Calu3 (cell line): ENCODE measurements at regions of chr10 and their contacts with region 1.

Region 1: DNA sequence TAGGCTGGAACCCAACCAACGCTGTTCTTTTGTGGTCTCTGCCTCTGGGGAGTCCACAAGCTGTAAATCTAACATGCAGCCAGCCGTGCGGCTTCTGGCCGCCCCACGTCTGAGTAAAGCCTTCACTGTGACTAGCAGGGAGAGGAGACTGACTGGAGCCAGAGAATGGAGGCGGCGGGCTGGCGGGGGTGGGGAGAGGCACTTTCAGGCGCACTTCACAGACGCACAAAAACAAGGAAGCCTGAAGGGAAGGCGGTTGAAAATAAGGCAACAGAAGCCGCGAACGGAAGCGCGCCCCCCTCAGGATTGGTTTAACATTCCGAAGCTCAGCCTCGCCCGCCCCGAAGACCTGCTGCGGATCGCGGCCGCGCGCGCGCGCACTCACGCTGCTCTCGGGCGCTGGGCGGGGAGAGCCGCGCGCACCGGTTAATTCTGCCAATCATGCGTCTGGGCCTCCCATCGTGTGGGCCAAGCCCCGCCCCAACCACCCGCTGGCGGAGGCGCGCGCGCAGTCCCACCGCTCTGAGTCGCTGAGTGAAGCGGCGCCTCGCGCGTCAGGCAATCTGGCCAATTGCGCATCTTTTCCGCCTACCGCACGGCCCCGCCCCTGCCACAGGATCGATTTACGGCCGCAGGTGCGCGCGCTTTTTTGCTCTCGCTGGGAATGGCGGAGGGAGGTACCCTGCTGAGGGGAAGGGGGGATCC is at the start of gene SFR1:
- DNase-seq: peak; percentile 96
- H3K4me3 Mint-ChIP-seq: peak within 1 kb of the TSS; percentile 70
- H3K27ac Mint-ChIP-seq: peak within 1 kb of the TSS; percentile 94
- H3K4me1 Mint-ChIP-seq: peaks cover 26% of the 10 kb centered on the region
- H3K27me3 Mint-ChIP-seq: no peaks in the 10 kb centered on the region
- CTCF ChIP-seq: peak; percentile 38
- total RNA-seq, gene SFR1: 10.2 and 11.6 TPM in 2 replicates

Region 2: GRCh38 chr10:103933557-103934121 is 188.0 kb before region 1 on chr10:
- CTCF ChIA-PET with region 1: no interaction called
- intact Hi-C with region 1: no loop called
- DNase-seq: no peak
- H3K4me3 Mint-ChIP-seq: no peak overlapping the region
- H3K27ac Mint-ChIP-seq: no peak overlapping the region
- H3K4me1 Mint-ChIP-seq: no peaks in the 10 kb centered on the region
- H3K27me3 Mint-ChIP-seq: no peaks in the 10 kb centered on the region
- CTCF ChIP-seq: no peak

Region 3: DNA sequence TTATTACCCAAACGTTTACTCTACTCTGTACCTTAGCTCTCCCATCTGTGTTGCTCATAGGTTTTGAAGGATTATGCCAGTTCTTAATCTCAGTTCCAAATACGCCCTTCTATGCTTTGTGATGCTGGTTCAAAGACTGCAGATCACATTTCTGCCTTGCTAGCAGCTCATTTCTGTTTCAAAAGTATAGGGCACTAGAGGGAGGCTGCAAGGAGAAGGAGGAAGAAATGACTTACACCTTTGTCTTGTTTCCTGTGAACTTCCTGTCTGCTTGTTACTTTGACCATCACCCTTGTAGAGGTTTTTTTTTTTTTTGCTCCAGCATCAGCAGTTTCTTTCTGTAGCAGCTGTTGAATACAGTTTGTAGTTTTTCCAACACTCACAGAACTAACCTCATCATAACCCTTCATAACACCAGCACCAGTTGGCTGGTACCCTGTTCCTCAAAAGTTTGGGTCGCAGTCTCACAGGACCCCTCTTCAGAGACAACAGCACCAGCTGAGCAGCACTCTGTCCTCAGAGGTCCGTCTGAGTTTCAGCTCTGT is 138.2 kb before region 1 on chr10:
- CTCF ChIA-PET with region 1: no interaction called
- intact Hi-C with region 1: no loop called
- DNase-seq: no peak
- H3K4me3 Mint-ChIP-seq: no peak overlapping the region
- H3K27ac Mint-ChIP-seq: no peak overlapping the region
- H3K4me1 Mint-ChIP-seq: peaks cover 38% of the 10 kb centered on the region
- H3K27me3 Mint-ChIP-seq: no peaks in the 10 kb centered on the region
- CTCF ChIP-seq: no peak

Region 4: GRCh38 chr10:104045151-104046089 is 76.3 kb before region 1 on chr10:
- CTCF ChIA-PET with region 1: interaction called, 5 read pairs
- intact Hi-C with region 1: loop called (anchors 1 kb)
- DNase-seq: peak; percentile 71
- H3K4me3 Mint-ChIP-seq: no peak overlapping the region
- H3K27ac Mint-ChIP-seq: no peak overlapping the region
- H3K4me1 Mint-ChIP-seq: no peaks in the 10 kb centered on the region
- H3K27me3 Mint-ChIP-seq: no peaks in the 10 kb centered on the region
- CTCF ChIP-seq: no peak

Region 5: DNA sequence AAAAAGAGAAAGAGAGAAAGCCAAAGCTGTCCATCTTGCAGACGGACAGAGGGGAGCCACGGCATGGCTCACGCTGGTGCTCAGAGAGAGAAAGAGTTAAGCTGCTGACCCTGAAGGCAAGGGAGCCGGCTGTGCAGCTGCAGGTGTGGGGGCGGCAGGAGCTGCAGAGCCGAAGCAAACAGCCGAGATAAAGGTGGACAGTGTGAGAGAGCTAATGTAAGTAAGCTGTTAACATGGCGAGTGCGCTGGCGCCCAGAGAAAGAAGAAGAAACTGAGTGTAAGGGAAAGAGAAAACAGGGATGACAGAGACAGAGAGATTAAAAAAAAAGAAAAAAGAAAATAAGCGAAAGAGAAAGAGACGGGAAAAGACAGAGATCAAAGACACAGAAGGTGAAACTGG is 54.1 kb before region 1 on chr10:
- CTCF ChIA-PET with region 1: no interaction called
- intact Hi-C with region 1: no loop called
- DNase-seq: no peak
- H3K4me3 Mint-ChIP-seq: no peak overlapping the region
- H3K27ac Mint-ChIP-seq: no peak overlapping the region
- H3K4me1 Mint-ChIP-seq: peaks cover 6% of the 10 kb centered on the region
- H3K27me3 Mint-ChIP-seq: no peaks in the 10 kb centered on the region
- CTCF ChIP-seq: no peak

Region 6: GRCh38 chr10:104080762-104081161 is 40.9 kb before region 1 on chr10:
- CTCF ChIA-PET with region 1: interaction called, 5 read pairs
- intact Hi-C with region 1: loop called (anchors 5 kb)
- DNase-seq: no peak
- H3K4me3 Mint-ChIP-seq: no peak overlapping the region
- H3K27ac Mint-ChIP-seq: no peak overlapping the region
- H3K4me1 Mint-ChIP-seq: peaks cover 9% of the 10 kb centered on the region
- H3K27me3 Mint-ChIP-seq: no peaks in the 10 kb centered on the region
- CTCF ChIP-seq: no peak

Region 7: GRCh38 chr10:104246976-104247375 is 125.3 kb after region 1 on chr10:
- CTCF ChIA-PET with region 1: no interaction called
- intact Hi-C with region 1: no loop called
- DNase-seq: no peak
- H3K4me3 Mint-ChIP-seq: no peak overlapping the region
- H3K27ac Mint-ChIP-seq: no peak overlapping the region
- H3K4me1 Mint-ChIP-seq: no peaks in the 10 kb centered on the region
- H3K27me3 Mint-ChIP-seq: no peaks in the 10 kb centered on the region
- CTCF ChIP-seq: no peak